ENCODE measurements at regions of chr2 and their contacts with region 1.

Region 1: GRCh38 chr2:175880-176800 is 87.7 kb downstream of the SH3YL1 start:
- DNase-seq: peak; percentile 15 to 84 (median 59)
- ATAC-seq: peak; percentile 98 to 99
- H3K4me3 Mint-ChIP-seq: peak overlapping the region; percentile 67 to 84 (median 76)
- H3K27ac Mint-ChIP-seq: peak overlapping the region; percentile 28 to 97 (median 88)
- H3K4me1 Mint-ChIP-seq: peaks cover 13 to 48% (median 38%) of the 10 kb centered on the region in 4 donors
- H3K27me3 Mint-ChIP-seq: no peaks in the 10 kb centered on the region

Region 2: GRCh38 chr2:264660-265468 is 88.7 kb after region 1 on chr2 and contains the start of gene ACP1:
- POLR2A ChIA-PET with region 1: interaction called, 15 read pairs
- DNase-seq: peak; percentile 91 to 99 (median 96)
- ATAC-seq: peak; percentile 77 to 79
- H3K4me3 Mint-ChIP-seq: peak within 1 kb of the TSS; percentile 91 to 97 (median 93)
- H3K27ac Mint-ChIP-seq: peak within 1 kb of the TSS; percentile 86 to 98 (median 98)
- H3K4me1 Mint-ChIP-seq: peaks cover 23 to 59% (median 51%) of the 10 kb centered on the region in 4 donors
- H3K27me3 Mint-ChIP-seq: peaks cover 0 to 1% (median 0%) of the 10 kb centered on the region in 5 donors
- polyA plus RNA-seq, gene ACP1: 179 to 196 (median 182) TPM